ENCODE measurements at regions of chr5 and their contacts with region 1.

Region 1: GRCh38 chr5:123460296-123460729 is 37.1 kb upstream of the CEP120 start:
- DNase-seq: peak; percentile 81
- H3K4me3 Mint-ChIP-seq: peak overlapping the region; percentile 10
- H3K27ac Mint-ChIP-seq: peak overlapping the region; percentile 90
- H3K4me1 Mint-ChIP-seq: peaks cover 20% of the 10 kb centered on the region
- H3K27me3 Mint-ChIP-seq: no peaks in the 10 kb centered on the region

Region 2: DNA sequence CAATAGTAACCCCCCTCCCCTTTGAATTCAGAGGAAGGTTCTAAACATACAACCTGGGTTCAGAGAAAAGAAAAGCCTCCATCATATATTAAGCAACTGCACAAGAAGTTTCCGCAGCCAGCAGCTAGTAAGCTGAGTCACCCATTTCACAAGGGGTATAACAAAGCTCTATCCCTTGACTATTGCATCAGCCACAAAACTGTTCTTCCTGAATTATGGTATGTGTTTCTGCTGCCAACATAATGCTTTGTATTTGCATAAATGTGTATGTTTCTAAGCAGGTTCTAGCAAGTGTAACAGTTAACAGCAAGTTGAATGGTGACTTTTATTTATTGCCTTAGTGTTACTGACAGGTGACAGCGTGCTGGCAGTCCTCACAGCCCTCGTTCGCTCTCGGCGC is 30.3 kb before region 1 on chr5:
- CTCF ChIA-PET with region 1: interaction called, 3 read pairs
- intact Hi-C with region 1: loop called (anchors 1 kb)
- DNase-seq: peak; percentile 47
- H3K4me3 Mint-ChIP-seq: no peak overlapping the region
- H3K27ac Mint-ChIP-seq: peak overlapping the region; percentile 73
- H3K4me1 Mint-ChIP-seq: peaks cover 14% of the 10 kb centered on the region
- H3K27me3 Mint-ChIP-seq: peaks cover 2% of the 10 kb centered on the region

Measured in activated naive CD4-positive, alpha-beta T cell treated with anti-CD3 and anti-CD28 coated beads for 36 hours (primary cell).